ENCODE measurements at regions of chr2 and their contacts with region 1.

Region 1: GRCh38 chr2:209977386-209978239 is 24.8 kb upstream of the RPE start:
- DNase-seq: no peak
- ATAC-seq: peak; percentile 42

Region 2: DNA sequence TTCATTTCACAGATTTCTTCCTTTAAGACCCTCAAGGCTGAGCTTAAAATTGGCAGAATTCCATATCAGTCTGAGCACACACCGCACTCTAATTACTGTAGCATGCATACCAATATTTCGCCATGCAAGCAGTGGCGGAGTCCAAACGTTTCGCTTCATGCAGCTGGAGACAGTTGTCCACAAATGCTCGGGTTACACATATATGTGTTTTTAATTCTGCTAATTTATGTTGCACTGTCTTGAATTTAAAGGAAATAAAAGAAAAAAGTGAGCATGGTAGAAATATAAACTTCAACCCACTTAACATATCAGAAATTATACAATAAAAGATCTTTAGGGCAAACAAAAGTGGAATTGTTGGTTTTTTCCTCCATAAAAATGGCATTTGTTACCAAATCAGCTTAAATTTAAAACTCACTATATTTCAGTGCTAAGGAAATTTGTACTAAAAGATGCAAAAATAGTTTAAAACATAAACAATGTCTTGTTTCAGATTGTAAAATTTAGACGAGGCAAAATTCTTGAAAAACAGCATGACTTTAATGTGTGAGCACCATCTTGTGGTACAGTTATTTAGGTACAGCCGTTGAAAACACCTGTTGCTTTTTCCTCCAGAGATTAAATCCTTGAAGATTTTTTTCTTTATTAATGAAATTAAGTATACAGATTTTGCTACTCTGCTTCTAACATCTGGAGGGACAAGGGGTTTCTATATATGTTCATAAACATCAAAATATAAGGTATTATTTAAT is 217.7 kb after region 1 on chr2:
- intact Hi-C with region 1: loop called (anchors 10 kb)
- DNase-seq: no peak
- ATAC-seq: no peak

Measured in sciatic nerve (tissue), 2 donors.